Left ventricle myocardium inferior (tissue), 1 donor: ENCODE measurements at regions of chr22 and their contacts with region 1.

Region 1: GRCh38 chr22:42437488-42438292 is 5.5 kb upstream of the NFAM1 start:
- DNase-seq: peak; percentile 68
- H3K4me3 ChIP-seq: peak overlapping the region; percentile 61
- H3K27ac ChIP-seq: peak overlapping the region; percentile 36
- H3K4me1 ChIP-seq: peaks cover 40% of the 10 kb centered on the region
- H3K27me3 ChIP-seq: peaks cover 69% of the 10 kb centered on the region
- CTCF ChIP-seq: peak; percentile 97

Region 2: GRCh38 chr22:42090596-42091454 is 346.9 kb before region 1 on chr22 and contains the start of gene NDUFA6:
- intact Hi-C with region 1: loop called (anchors 10 kb)
- DNase-seq: peak; percentile 98
- H3K4me3 ChIP-seq: peak within 1 kb of the TSS; percentile 88
- H3K27ac ChIP-seq: peak within 1 kb of the TSS; percentile 98
- H3K4me1 ChIP-seq: peaks cover 56% of the 10 kb centered on the region
- H3K27me3 ChIP-seq: no peaks in the 10 kb centered on the region
- CTCF ChIP-seq: peak; percentile 92
- total RNA-seq, gene NDUFA6: 270 TPM

Region 3: DNA sequence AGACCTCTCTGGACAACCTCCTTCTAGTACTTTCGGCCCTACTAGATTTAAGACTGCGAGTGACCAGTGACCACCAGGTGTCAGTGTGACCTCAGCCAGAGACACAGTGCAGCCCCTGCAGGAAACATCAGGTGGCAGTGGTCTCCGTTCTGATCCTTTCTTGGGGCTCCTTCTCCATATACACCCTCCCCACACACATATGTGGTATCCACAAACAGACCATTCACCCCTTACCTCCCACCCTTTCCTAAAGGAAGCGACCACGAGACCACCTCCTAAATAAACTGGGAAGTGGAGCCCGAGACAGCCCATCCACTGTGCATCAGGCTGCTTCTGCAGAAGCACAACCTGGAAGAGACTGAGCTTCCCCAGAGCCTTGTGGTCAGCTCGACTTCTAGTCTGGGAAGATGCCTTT is 268.6 kb before region 1 on chr22:
- intact Hi-C with region 1: loop called (anchors 2 kb)
- DNase-seq: peak; percentile 55
- H3K4me3 ChIP-seq: no peak overlapping the region
- H3K27ac ChIP-seq: no peak overlapping the region
- H3K4me1 ChIP-seq: peaks cover 15% of the 10 kb centered on the region
- H3K27me3 ChIP-seq: no peaks in the 10 kb centered on the region
- CTCF ChIP-seq: peak; percentile 92

Region 4: GRCh38 chr22:42608823-42609361 is 171.2 kb after region 1 on chr22:
- intact Hi-C with region 1: no loop called
- DNase-seq: no peak
- H3K4me3 ChIP-seq: peak overlapping the region; percentile 14
- H3K27ac ChIP-seq: peak overlapping the region; percentile 57
- H3K4me1 ChIP-seq: peaks cover 90% of the 10 kb centered on the region
- H3K27me3 ChIP-seq: no peaks in the 10 kb centered on the region
- CTCF ChIP-seq: no peak